Endothelial cell of umbilical vein (primary cell): ENCODE measurements at regions of chr9 and their contacts with region 1.

Region 1: DNA sequence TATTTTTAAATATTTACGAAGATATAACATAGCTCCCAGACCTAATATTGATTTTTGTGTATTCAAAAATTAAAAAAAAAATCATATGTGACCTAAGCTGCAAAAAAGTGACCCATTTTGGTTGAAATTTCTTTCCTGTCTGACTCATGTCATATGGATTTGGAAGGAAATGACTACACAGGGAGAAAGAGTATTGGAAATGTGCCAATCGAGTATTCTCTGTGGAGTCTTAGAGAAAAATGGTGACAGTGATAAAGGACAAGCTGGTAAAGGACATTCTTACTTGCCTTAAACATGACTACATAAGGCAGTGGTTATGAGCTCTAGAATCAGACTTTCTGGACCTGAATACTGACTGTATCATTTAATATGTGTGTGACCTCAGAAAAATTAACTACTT is 262.9 kb upstream of the PTPRD start:
- DNase-seq: peak; percentile 84
- H3K4me3 ChIP-seq: no peak overlapping the region
- H3K27ac ChIP-seq: peak overlapping the region; percentile 77
- H3K4me1 ChIP-seq: peaks cover 16% of the 10 kb centered on the region
- H3K27me3 ChIP-seq: no peaks in the 10 kb centered on the region
- CTCF ChIP-seq: no peak
- POLR2A ChIP-seq: no peak

Region 2: GRCh38 chr9:10903969-10904368 is 28.2 kb after region 1 on chr9:
- CTCF ChIA-PET with region 1: no interaction called
- POLR2A ChIA-PET with region 1: no interaction called
- dilution Hi-C with region 1: no loop called
- intact Hi-C with region 1: loop called (anchors 1 kb)
- DNase-seq: peak; percentile 86
- H3K4me3 ChIP-seq: no peak overlapping the region
- H3K27ac ChIP-seq: peak overlapping the region; percentile 34
- H3K4me1 ChIP-seq: peaks cover 17% of the 10 kb centered on the region
- H3K27me3 ChIP-seq: no peaks in the 10 kb centered on the region
- CTCF ChIP-seq: no peak
- POLR2A ChIP-seq: no peak

Region 3: DNA sequence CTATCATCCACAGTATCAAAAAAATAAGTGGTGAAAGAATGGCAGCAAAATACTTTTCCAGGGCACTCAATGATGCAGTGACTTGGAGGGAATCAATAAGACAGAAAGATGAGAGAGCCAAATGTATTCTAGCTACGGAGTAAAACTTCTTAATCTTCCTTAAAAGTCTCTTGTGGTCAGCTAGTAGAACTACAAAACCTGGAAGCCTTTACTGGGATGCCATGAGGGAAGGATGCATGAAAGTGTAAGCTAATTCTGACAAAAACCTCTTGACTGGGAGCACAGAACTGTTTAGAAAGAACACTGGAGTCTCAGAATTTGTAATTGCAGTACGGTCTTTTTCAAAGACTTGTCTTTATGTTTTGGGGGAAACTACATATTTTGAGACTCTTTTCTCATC is 169.8 kb after region 1 on chr9:
- CTCF ChIA-PET with region 1: no interaction called
- POLR2A ChIA-PET with region 1: no interaction called
- dilution Hi-C with region 1: no loop called
- intact Hi-C with region 1: no loop called
- DNase-seq: no peak
- H3K4me3 ChIP-seq: no peak overlapping the region
- H3K27ac ChIP-seq: no peak overlapping the region
- H3K4me1 ChIP-seq: no peaks in the 10 kb centered on the region
- H3K27me3 ChIP-seq: no peaks in the 10 kb centered on the region
- CTCF ChIP-seq: no peak
- POLR2A ChIP-seq: no peak

Region 4: DNA sequence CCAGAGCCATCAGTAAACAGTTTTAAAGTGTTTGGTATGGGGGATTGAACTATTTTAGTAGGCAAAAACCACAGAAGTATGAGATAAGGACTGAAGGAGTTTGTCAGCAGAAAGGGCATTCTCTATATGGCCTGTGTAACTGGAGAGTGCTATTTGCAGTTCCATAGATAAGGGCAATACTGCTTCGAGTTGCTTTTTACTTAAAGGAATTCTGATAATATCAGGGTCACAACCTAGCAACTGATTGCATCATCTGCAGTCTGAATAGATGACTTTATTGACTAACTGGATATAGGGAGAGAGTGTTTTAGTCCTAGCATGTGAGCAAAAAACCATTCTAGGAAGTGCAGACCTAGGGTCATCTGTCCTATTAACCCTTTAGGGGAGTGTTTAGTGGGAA is 382.2 kb after region 1 on chr9:
- CTCF ChIA-PET with region 1: no interaction called
- POLR2A ChIA-PET with region 1: no interaction called
- dilution Hi-C with region 1: no loop called
- intact Hi-C with region 1: no loop called
- DNase-seq: no peak
- H3K4me3 ChIP-seq: no peak overlapping the region
- H3K27ac ChIP-seq: no peak overlapping the region
- H3K4me1 ChIP-seq: no peaks in the 10 kb centered on the region
- H3K27me3 ChIP-seq: no peaks in the 10 kb centered on the region
- CTCF ChIP-seq: no peak
- POLR2A ChIP-seq: no peak